Spleen (tissue), 13 donors: ENCODE measurements at regions of chr6 and their contacts with region 1.

Region 1: DNA sequence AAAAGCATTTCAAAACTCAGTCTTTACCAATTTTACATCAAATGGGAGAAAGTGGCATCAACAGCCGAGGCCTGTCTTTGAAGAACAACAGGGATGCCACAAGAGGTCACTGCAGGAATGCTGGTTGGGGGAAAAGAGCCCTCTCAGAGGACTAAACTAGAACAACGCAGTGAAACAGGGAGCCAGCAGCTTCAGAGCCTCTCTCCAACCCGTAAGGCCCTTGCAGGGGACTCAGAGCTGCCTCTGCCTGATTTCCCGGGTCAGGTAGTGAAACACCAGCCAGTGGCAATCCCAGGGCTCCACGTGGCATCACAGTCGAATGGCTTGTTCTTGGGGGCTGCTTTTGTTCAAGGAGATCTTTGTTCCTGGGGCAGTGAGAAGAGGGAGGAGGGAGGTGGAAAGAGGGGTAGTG is 55.0 kb upstream of the KCNK16 start:
- DNase-seq: no peak
- H3K4me3 ChIP-seq: no peak overlapping the region
- H3K27ac ChIP-seq: no peak overlapping the region
- H3K4me1 ChIP-seq: no peaks in the 10 kb centered on the region
- H3K27me3 ChIP-seq: no peaks in the 10 kb centered on the region
- CTCF ChIP-seq: peak in 9 of 11 experiments; percentile 8 to 43 (median 31)
- POLR2A ChIP-seq: no peak

Region 2: DNA sequence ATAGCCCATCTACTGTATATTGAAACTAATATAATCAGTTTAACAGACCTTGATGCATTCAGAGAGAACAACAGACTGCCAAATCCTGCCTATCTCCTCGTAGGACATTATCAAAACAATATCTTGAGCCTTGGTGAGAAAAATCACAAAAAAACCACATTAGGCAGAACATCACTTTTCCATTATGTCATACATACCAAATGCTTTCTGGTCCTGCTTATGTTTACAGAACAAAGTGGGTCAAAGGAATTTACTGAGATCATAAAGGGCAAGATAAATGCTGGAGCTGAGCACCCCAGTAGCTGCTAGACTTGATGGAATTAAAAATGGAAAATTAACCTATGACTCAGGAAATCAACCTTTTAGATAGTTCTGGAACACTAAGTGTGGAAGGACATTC is 140.2 kb after region 1 on chr6:
- intact Hi-C with region 1: no loop called
- DNase-seq: no peak
- H3K4me3 ChIP-seq: no peak overlapping the region
- H3K27ac ChIP-seq: no peak overlapping the region
- H3K4me1 ChIP-seq: peaks cover 0 to 5% (median 0%) of the 10 kb centered on the region in 6 donors
- H3K27me3 ChIP-seq: peaks cover 0 to 4% (median 0%) of the 10 kb centered on the region in 7 donors
- CTCF ChIP-seq: no peak
- POLR2A ChIP-seq: no peak

Region 3: GRCh38 chr6:39892490-39893129 is 515.1 kb after region 1 on chr6:
- intact Hi-C with region 1: loop called (anchors 10 kb)
- DNase-seq: no peak
- H3K4me3 ChIP-seq: no peak overlapping the region
- H3K27ac ChIP-seq: peak overlapping the region in 4 of 8 donors; percentile 8 to 38 (median 23)
- H3K4me1 ChIP-seq: peaks cover 0 to 17% (median 2%) of the 10 kb centered on the region in 6 donors
- H3K27me3 ChIP-seq: peaks cover 0 to 18% (median 0%) of the 10 kb centered on the region in 7 donors
- CTCF ChIP-seq: peak in 10 of 11 experiments; percentile 13 to 69 (median 46)
- POLR2A ChIP-seq: no peak